ENCODE measurements at regions of chr9 and their contacts with region 1.

Region 1: GRCh38 chr9:87422999-87423398 is 74.7 kb upstream of the DAPK1 start:
- DNase-seq: no peak
- ATAC-seq: no peak
- H3K4me3 Mint-ChIP-seq: no peak overlapping the region
- H3K27ac Mint-ChIP-seq: no peak overlapping the region
- H3K4me1 Mint-ChIP-seq: peaks cover 2% of the 10 kb centered on the region
- H3K27me3 Mint-ChIP-seq: no peaks in the 10 kb centered on the region

Region 2: GRCh38 chr9:87445646-87446045 is 22.6 kb after region 1 on chr9:
- POLR2A ChIA-PET with region 1: interaction called, 14 read pairs
- DNase-seq: no peak
- ATAC-seq: no peak
- H3K4me3 Mint-ChIP-seq: no peak overlapping the region
- H3K27ac Mint-ChIP-seq: no peak overlapping the region
- H3K4me1 Mint-ChIP-seq: no peaks in the 10 kb centered on the region
- H3K27me3 Mint-ChIP-seq: peaks cover 2% of the 10 kb centered on the region